Dorsolateral prefrontal cortex (tissue), 120 donors: ENCODE measurements at regions of chr6 and their contacts with region 1.

Region 1: DNA sequence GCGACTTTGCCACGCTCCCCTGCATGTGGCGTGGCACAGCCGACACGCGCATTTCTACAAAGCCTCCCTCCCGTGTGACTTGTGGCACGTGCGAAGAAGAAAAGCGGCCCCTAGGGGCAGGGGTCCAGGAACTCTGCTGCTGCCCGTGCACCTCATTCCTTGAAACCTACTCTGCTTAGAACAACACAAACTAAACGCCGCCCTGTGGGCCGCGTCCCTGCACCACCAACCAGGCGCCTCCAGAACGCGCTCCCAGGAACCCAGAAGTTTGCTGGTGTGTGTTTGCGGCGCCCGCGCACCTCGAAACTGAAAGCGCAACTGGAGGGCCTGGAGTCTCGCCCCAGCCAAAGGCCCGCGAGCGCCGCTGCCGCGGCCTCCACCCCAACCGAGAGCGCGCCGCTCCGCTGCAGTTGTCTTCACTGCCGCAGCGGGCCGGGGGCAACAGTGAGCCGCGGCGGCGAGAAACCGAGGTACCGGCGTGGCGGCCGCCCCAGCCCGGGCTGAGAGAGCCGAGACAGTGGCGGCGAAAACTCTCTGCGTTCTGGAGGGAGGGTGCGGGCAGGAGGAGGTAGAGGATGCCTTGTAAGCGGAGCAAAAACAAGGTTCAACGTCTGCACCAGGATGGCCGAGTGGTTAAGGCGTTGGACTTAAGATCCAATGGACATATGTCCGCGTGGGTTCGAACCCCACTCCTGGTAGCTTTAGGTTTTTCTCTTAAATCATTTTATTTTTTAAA is 65.8 kb downstream of the STX11 start:
- DNase-seq: peak; percentile 72 to 95 (median 92)
- H3K4me3 ChIP-seq: peak overlapping the region; percentile 60 to 94 (median 78)
- H3K27ac ChIP-seq: peak overlapping the region; percentile 86 to 100 (median 96)
- H3K27me3 ChIP-seq: no peaks in the 10 kb centered on the region
- CTCF ChIP-seq: peak in 52 of 56 donors; percentile 21 to 77 (median 54)

Region 2: GRCh38 chr6:143510991-143511891 is 704.9 kb before region 1 on chr6 and contains the start of gene FUCA2:
- intact Hi-C with region 1: loop called in 1 of 2 experiments (anchors 10 kb)
- DNase-seq: peak; percentile 79 to 90 (median 86)
- H3K4me3 ChIP-seq: peak within 1 kb of the TSS; percentile 55 to 94 (median 82)
- H3K27ac ChIP-seq: peak within 1 kb of the TSS; percentile 9 to 94 (median 85)
- H3K27me3 ChIP-seq: no peaks in the 10 kb centered on the region
- CTCF ChIP-seq: peak in 40 of 56 donors; percentile 1 to 60 (median 31)
- total RNA-seq, gene FUCA2: 10.6 to 32.8 (median 18.7) TPM

Region 3: GRCh38 chr6:144095331-144096002 is 120.6 kb before region 1 on chr6 and contains the start of gene SF3B5:
- intact Hi-C with region 1: loop called (anchors 1 to 2 kb)
- DNase-seq: peak; percentile 97 to 99 (median 99)
- H3K4me3 ChIP-seq: peak within 1 kb of the TSS; percentile 66 to 100 (median 94)
- H3K27ac ChIP-seq: peak within 1 kb of the TSS in 54 of 59 donors; percentile 11 to 90 (median 75)
- H3K27me3 ChIP-seq: no peaks in the 10 kb centered on the region
- CTCF ChIP-seq: peak in 31 of 56 donors; percentile 8 to 61 (median 29)
- total RNA-seq, gene SF3B5: 62.2 to 97.4 (median 77.0) TPM

Region 4: GRCh38 chr6:144149891-144150709 is 66.0 kb before region 1 on chr6 and contains the start of gene STX11:
- intact Hi-C with region 1: loop called in 1 of 2 experiments (anchors 5 kb)
- DNase-seq: peak in 6 of 10 donors; percentile 23 to 71 (median 43)
- H3K4me3 ChIP-seq: peak within 1 kb of the TSS; percentile 44 to 90 (median 76)
- H3K27ac ChIP-seq: peak within 1 kb of the TSS in 25 of 59 donors; percentile 2 to 75 (median 33)
- H3K27me3 ChIP-seq: peaks cover 0 to 21% (median 3%) of the 10 kb centered on the region in 45 donors
- CTCF ChIP-seq: no peak
- total RNA-seq, gene STX11: 0.25 to 3.0 (median 1.0) TPM

Region 5: GRCh38 chr6:144482142-144482541 is 266.0 kb after region 1 on chr6:
- intact Hi-C with region 1: loop called in 1 of 2 experiments (anchors 5 kb)
- DNase-seq: peak in 9 of 10 donors; percentile 30 to 73 (median 54)
- H3K4me3 ChIP-seq: no peak overlapping the region
- H3K27ac ChIP-seq: no peak overlapping the region
- H3K27me3 ChIP-seq: no peaks in the 10 kb centered on the region
- CTCF ChIP-seq: peak; percentile 14 to 78 (median 60)